HEK293T (cell line): ENCODE measurements at regions of chr17 and their contacts with region 1.

Region 1: GRCh38 chr17:42536048-42536371 is at the start of gene NAGLU:
- DNase-seq: peak; percentile 96

Region 2: DNA sequence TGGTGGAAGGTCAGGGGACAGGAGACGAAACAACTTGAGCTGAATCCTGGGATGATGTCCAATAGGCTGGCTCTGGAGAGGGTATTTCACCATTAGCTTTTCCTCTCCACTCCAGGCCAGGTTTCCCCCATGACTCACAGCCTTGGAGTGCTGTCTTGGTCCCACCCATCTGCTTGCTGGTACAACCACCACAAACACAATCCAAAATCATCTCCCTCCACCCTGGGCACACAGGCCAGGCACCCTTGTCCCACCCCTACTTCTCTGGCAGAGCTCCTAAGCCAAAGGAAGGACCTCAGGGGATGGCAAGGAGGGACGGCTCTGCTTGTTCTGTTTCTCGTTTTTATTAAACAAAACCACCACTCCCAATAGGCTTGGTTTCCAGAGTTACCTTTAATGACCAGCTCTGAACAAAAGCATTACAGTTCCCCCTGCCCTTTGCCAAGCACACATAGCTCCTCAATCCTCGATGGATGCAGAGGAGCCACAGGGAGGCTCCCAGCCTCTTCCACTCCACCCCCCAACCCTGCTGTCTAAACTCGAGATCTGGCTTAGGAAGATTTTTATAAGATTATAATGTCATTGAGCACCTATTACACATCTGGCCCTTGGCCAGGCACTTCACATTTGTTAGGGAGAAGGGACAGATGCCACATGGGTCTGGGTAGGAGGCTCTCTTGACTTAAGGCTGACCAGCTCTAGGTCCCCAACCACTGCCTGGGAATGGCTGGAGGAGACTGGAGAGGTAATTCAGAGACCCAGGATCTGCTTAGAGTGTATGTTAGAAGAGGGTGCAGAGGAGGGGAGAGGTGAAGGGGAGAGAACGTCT is 126.3 kb before region 1 on chr17:
- CTCF ChIA-PET with region 1: no interaction called
- POLR2A ChIA-PET with region 1: no interaction called
- DNase-seq: no peak

Region 3: GRCh38 chr17:42493319-42493718 is 42.7 kb before region 1 on chr17:
- CTCF ChIA-PET with region 1: no interaction called
- POLR2A ChIA-PET with region 1: no interaction called
- DNase-seq: no peak

Region 4: GRCh38 chr17:42548070-42548837 is 12.2 kb after region 1 on chr17:
- CTCF ChIA-PET with region 1: interaction called, 3 read pairs
- POLR2A ChIA-PET with region 1: interaction called, 37 read pairs
- DNase-seq: no peak

Region 5: GRCh38 chr17:42554250-42555121 is 18.5 kb after region 1 on chr17:
- CTCF ChIA-PET with region 1: interaction called, 5 read pairs
- POLR2A ChIA-PET with region 1: interaction called, 37 read pairs
- DNase-seq: peak; percentile 86

Region 6: GRCh38 chr17:42566883-42567573 is 31.0 kb after region 1 on chr17 and contains the start of gene MLX:
- CTCF ChIA-PET with region 1: interaction called, 4 read pairs
- POLR2A ChIA-PET with region 1: interaction called, 15 read pairs
- DNase-seq: peak; percentile 99